ENCODE measurements at regions of chr5 and their contacts with region 1.

Region 1: DNA sequence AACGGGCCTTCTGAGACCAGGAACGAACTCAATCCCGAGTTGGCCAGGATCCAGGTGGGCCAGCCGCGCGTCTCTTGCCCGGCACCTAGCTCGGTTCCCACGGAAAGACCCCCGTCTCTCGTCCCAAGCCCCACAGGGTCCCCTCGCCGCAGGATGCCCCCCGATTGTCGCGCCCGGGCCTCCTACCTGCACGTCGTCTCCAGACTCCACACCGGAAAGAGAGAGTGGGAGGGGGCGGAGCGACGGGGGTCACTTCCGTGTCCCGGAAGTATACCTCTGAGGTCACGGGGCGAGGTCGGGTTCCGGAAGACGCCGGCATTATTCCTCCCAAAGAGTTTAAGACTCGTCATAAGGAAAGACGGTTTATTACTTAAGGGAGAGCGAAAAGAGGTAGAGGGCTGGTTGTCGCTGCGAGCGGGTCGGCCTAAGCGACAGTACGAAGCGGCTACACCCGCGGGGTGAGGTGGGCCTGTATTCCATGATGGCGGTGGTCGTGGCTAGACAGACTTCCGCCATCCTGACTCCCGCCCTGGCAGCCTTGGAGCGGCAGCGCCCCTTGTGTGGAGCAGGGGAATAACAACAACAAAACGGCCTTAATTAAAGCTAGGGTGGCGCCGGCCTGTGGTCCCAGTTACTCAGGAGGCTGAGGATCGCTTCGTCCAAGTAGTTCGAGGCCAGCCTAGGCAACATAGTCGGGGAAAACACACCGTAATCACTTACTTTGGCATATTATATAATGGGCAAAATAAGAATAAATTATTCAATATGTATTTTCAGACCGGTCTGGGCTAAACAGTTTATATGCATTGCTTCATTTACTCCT is at the start of gene RPS14:
- DNase-seq: peak; percentile 91
- H3K4me3 Mint-ChIP-seq: peak within 1 kb of the TSS; percentile 92
- H3K27ac Mint-ChIP-seq: peak within 1 kb of the TSS; percentile 100
- H3K4me1 Mint-ChIP-seq: peaks cover 40% of the 10 kb centered on the region
- H3K27me3 Mint-ChIP-seq: peaks cover 2% of the 10 kb centered on the region
- total RNA-seq, gene RPS14: 2,328 and 2,429 TPM in 2 replicates

Region 2: DNA sequence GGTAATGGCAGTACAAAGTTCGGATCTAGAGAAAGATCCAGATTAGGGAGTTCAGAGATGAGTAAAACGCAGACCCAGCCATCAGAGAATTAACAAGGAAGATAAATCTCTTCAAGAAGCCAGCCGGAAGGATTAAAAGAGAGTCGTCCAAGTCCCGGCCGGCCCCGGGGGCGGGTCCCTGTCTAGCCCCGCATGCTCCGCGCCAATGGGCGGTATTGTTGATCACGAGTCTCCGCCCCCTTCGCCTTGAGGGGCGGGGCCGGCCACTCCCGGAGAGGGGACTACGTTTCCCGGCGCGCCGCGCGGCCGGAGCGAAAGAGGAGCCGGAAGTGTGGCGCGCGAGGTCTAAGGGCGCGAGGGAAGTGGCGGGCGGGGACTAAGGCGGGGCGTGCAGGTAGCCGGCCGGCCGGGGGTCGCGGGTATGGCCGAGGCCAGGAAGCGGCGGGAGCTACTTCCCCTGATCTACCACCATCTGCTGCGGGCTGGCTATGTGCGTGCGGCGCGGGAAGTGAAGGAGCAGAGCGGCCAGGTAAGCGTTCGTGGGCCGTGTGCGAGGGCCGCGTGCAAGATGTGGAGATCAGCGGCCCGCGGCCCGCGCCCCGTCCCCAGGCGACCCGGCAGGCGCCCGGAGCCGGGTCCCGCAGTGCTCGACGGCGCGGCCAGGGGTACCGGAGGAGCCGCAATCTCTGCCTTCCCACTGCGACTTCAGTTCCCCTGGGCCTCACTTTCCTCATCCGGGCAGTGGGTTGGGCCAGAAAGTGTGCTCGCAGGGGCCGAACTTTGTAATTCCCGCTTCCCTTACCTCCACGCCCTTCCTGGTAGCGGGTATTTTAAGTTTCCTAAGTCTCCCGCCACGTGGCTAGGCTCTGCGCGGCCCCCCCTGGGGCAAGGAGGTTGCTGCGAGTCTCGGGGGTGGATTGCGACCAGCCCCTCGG is 92.1 kb before region 1 on chr5 and contains the start of gene TCOF1:
- intact Hi-C with region 1: loop called (anchors 1 kb)
- DNase-seq: peak; percentile 97
- H3K4me3 Mint-ChIP-seq: peak within 1 kb of the TSS; percentile 93
- H3K27ac Mint-ChIP-seq: peak within 1 kb of the TSS; percentile 91
- H3K4me1 Mint-ChIP-seq: peaks cover 39% of the 10 kb centered on the region
- H3K27me3 Mint-ChIP-seq: no peaks in the 10 kb centered on the region
- total RNA-seq, gene TCOF1: 130 and 131 TPM in 2 replicates

Region 3: DNA sequence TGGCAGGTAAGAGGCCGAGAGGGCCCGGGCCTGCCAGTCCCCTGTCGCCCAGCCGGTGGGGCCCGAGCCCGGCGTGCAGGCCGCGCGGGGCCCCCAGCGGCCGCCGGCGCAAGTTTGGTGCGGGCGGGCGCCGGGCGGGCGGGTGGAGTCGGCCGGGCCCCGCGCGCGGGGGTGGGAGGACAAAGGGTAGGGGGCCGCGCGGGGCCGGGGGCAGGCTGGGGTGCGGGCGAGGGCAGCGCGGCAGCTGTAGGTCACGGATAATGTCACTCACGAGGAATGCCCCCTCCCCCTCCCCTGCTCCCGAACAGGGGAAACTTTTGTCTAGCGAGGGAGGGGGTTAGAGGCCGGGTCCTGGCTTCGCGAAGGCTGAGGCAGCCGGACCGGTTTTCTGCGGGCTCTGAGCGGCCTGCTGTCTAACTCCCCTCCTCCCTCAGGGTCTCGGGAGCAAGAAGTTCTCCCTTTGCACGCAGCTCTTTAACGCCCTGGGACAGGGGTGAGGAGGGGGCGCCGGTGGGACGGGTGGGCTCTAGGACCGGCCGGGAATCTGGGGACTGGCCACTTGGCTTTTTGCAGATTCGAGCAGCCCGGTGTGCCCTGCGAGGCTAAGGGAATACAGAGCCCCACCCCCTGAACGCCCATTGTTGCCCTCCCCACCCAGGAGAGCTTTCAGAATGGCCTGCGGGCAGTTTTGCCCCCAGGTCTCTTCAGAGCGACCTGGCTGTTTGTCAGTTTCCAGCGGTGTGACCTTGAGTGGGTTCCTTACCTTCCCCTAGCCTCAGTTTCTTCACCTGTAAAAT is 36.9 kb after region 1 on chr5:
- intact Hi-C with region 1: loop called (anchors 2 kb)
- DNase-seq: peak; percentile 11
- H3K4me3 Mint-ChIP-seq: peak overlapping the region; percentile 68
- H3K27ac Mint-ChIP-seq: no peak overlapping the region
- H3K4me1 Mint-ChIP-seq: no peaks in the 10 kb centered on the region
- H3K27me3 Mint-ChIP-seq: peaks cover 11% of the 10 kb centered on the region

Region 4: DNA sequence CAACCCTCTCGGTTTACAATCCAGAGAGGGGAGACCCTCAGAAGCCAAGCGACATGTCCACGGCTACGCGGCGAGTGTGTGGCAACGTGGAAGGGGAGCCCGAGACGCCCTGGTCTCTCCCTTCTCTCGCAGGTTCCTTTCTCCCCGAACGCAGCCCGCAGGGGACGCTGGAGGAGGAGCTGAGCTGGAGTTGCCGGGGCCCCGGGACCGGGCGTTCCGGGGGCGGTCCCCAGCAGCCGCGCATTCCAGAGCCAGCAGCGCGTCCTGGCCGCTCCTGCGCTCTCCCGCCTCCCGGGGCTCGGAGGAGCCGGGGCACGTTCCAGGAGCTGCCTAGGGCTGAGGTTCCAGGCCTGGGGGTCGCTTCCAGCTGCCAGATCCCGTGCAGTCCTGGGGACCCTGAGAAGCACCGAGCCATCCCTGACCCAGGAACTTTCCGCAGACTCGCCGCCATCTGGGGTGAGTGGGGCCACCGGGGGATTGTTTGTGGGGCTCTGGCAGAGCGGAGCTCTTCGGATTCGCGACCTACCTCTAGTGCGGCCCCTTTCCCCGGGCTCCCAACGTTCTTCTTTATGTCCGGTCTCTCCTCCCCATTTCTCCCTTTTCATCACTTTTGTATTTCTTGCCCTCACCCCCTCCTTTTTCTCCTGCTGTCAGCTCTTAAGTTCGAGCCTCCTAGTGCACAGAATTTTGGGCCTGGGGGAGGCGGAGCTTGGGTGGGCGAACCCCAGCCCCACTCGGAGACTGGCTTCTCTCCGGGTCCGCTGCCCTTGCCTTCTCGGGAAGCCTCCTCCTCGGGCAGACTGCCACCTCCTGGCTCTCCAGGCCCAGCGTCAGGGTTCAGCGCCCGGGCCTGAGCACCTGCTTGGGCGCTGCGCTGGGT is 329.0 kb after region 1 on chr5 and contains the start of gene SMIM3:
- intact Hi-C with region 1: loop called (anchors 1 kb)
- DNase-seq: peak; percentile 53
- H3K4me3 Mint-ChIP-seq: peak within 1 kb of the TSS; percentile 100
- H3K27ac Mint-ChIP-seq: peak within 1 kb of the TSS; percentile 83
- H3K4me1 Mint-ChIP-seq: peaks cover 62% of the 10 kb centered on the region
- H3K27me3 Mint-ChIP-seq: peaks cover 2% of the 10 kb centered on the region
- total RNA-seq, gene SMIM3: 12.8 and 13.4 TPM in 2 replicates

Region 5: GRCh38 chr5:150989695-150990094 is 540.0 kb after region 1 on chr5:
- intact Hi-C with region 1: no loop called
- DNase-seq: no peak
- H3K4me3 Mint-ChIP-seq: no peak overlapping the region
- H3K27ac Mint-ChIP-seq: no peak overlapping the region
- H3K4me1 Mint-ChIP-seq: no peaks in the 10 kb centered on the region
- H3K27me3 Mint-ChIP-seq: no peaks in the 10 kb centered on the region